Gastrocnemius medialis (tissue), 4 donors: ENCODE measurements at regions of chr12 and their contacts with region 1.

Region 1: DNA sequence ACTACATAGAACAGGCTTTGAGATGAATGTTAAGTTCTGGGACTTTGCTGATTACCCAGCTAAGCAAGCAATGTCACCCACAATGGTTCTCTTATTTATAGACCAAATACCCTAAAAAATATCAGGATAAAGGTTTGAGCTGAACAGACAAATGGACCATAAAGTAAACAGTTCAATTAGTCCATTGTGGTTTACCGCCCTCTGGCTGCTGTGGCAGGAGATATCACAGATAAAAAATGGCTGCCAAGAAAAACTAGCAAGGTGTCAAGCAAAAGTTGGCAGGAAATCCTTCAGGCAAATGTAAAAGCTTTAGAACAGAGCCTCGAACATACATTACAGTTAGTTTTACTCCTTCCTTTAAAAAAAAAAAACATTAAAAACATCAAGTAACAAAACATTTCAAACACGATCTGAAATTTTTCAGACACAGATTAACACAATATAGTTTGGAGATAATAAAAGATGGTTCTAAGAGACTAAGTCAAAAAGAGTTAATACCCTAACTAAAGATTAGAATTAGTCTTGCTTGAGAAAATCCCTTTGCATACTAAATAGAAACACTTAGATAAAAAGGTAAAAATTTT is 41.3 kb downstream of the MED13L start:
- DNase-seq: peak; percentile 43 to 56
- ATAC-seq: peak; percentile 80 to 82
- H3K4me3 ChIP-seq: no peak overlapping the region
- H3K27ac ChIP-seq: peak overlapping the region; percentile 4 to 73 (median 44)
- H3K4me1 ChIP-seq: peaks cover 51 to 64% of the 10 kb centered on the region in 2 donors
- H3K27me3 ChIP-seq: no peaks in the 10 kb centered on the region
- CTCF ChIP-seq: peak; percentile 74 to 91 (median 82)
- POLR2A ChIP-seq: no peak

Region 2: GRCh38 chr12:115998119-115998633 is 238.1 kb before region 1 on chr12:
- in situ Hi-C with region 1: loop called (anchors 5 to 10 kb)
- intact Hi-C with region 1: loop called (anchors 1 kb)
- DNase-seq: no peak
- ATAC-seq: peak; percentile 51 to 62
- H3K4me3 ChIP-seq: no peak overlapping the region
- H3K27ac ChIP-seq: peak overlapping the region; percentile 37 to 51 (median 44)
- H3K4me1 ChIP-seq: peaks cover 24 to 25% of the 10 kb centered on the region in 2 donors
- H3K27me3 ChIP-seq: no peaks in the 10 kb centered on the region
- CTCF ChIP-seq: peak; percentile 70 to 85 (median 78)
- POLR2A ChIP-seq: no peak

Region 3: GRCh38 chr12:116009805-116010204 is 226.4 kb before region 1 on chr12:
- in situ Hi-C with region 1: loop called in 1 of 4 experiments (anchors 10 kb)
- intact Hi-C with region 1: loop called (anchors 5 kb)
- DNase-seq: no peak
- ATAC-seq: peak in 1 of 2 donors; percentile 22
- H3K4me3 ChIP-seq: no peak overlapping the region
- H3K27ac ChIP-seq: no peak overlapping the region
- H3K4me1 ChIP-seq: no peaks in the 10 kb centered on the region
- H3K27me3 ChIP-seq: no peaks in the 10 kb centered on the region
- CTCF ChIP-seq: peak in 2 of 5 experiments; percentile 23 to 31
- POLR2A ChIP-seq: no peak

Region 4: DNA sequence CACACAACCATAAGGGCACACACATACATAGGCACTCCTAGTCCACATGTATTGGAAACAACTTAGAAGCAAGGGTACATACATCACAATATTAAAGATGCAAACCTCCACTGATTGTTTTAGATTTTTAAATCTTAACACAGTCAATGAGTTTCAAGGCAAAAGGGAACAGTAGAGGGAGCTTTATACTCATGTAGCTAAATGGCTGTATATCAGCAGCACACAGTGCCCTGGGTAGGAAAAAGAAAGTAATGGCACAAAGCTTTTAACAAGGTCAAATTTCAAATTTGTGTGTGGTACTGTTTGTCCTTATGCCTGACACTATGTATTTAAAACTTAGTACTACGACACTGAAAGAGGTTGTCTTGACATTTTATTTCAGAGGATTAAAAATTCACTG is 220.7 kb before region 1 on chr12:
- in situ Hi-C with region 1: no loop called
- intact Hi-C with region 1: loop called (anchors 5 kb)
- DNase-seq: no peak
- ATAC-seq: peak; percentile 76 to 87
- H3K4me3 ChIP-seq: no peak overlapping the region
- H3K27ac ChIP-seq: peak overlapping the region in 2 of 4 donors; percentile 48 to 51
- H3K4me1 ChIP-seq: peaks cover 30 to 34% of the 10 kb centered on the region in 2 donors
- H3K27me3 ChIP-seq: no peaks in the 10 kb centered on the region
- CTCF ChIP-seq: peak; percentile 16 to 66 (median 58)
- POLR2A ChIP-seq: no peak

Region 5: GRCh38 chr12:116066381-116067230 is 169.6 kb before region 1 on chr12:
- in situ Hi-C with region 1: no loop called
- intact Hi-C with region 1: loop called (anchors 5 kb)
- DNase-seq: no peak
- ATAC-seq: no peak
- H3K4me3 ChIP-seq: no peak overlapping the region
- H3K27ac ChIP-seq: no peak overlapping the region
- H3K4me1 ChIP-seq: peaks cover 90 to 91% of the 10 kb centered on the region in 2 donors
- H3K27me3 ChIP-seq: no peaks in the 10 kb centered on the region
- CTCF ChIP-seq: peak in 4 of 5 experiments; percentile 36 to 50 (median 39)
- POLR2A ChIP-seq: no peak

Region 6: GRCh38 chr12:116142936-116143898 is 93.0 kb before region 1 on chr12:
- in situ Hi-C with region 1: loop called in 2 of 4 experiments (anchors 10 to 25 kb)
- intact Hi-C with region 1: loop called (anchors 2 kb)
- DNase-seq: no peak
- ATAC-seq: no peak
- H3K4me3 ChIP-seq: no peak overlapping the region
- H3K27ac ChIP-seq: peak overlapping the region; percentile 32 to 67 (median 64)
- H3K4me1 ChIP-seq: peaks cover 63 to 70% of the 10 kb centered on the region in 2 donors
- H3K27me3 ChIP-seq: no peaks in the 10 kb centered on the region
- CTCF ChIP-seq: no peak
- POLR2A ChIP-seq: no peak

Region 7: GRCh38 chr12:116629480-116629879 is 393.2 kb after region 1 on chr12:
- in situ Hi-C with region 1: no loop called
- intact Hi-C with region 1: no loop called
- DNase-seq: no peak
- ATAC-seq: peak in 1 of 2 donors; percentile 45
- H3K4me3 ChIP-seq: no peak overlapping the region
- H3K27ac ChIP-seq: no peak overlapping the region
- H3K4me1 ChIP-seq: no peaks in the 10 kb centered on the region
- H3K27me3 ChIP-seq: peaks cover 0 to 6% (median 2%) of the 10 kb centered on the region in 3 donors
- CTCF ChIP-seq: no peak
- POLR2A ChIP-seq: no peak

Region 8: GRCh38 chr12:116726694-116727093 is 490.5 kb after region 1 on chr12:
- in situ Hi-C with region 1: no loop called
- intact Hi-C with region 1: no loop called
- DNase-seq: no peak
- ATAC-seq: no peak
- H3K4me3 ChIP-seq: no peak overlapping the region
- H3K27ac ChIP-seq: no peak overlapping the region
- H3K4me1 ChIP-seq: peaks cover 0 to 5% of the 10 kb centered on the region in 2 donors
- H3K27me3 ChIP-seq: no peaks in the 10 kb centered on the region
- CTCF ChIP-seq: no peak
- POLR2A ChIP-seq: no peak